ENCODE measurements at regions of chr1 and their contacts with region 1.

Region 1: GRCh38 chr1:207868774-207869721 is 41.9 kb downstream of the CD34 start:
- DNase-seq: peak; percentile 90
- ATAC-seq: peak; percentile 87
- H3K4me3 ChIP-seq: peak overlapping the region; percentile 86
- H3K27ac ChIP-seq: peak overlapping the region; percentile 96
- H3K4me1 ChIP-seq: peaks cover 70% of the 10 kb centered on the region
- H3K27me3 ChIP-seq: no peaks in the 10 kb centered on the region
- CTCF ChIP-seq: peak; percentile 73

Region 2: DNA sequence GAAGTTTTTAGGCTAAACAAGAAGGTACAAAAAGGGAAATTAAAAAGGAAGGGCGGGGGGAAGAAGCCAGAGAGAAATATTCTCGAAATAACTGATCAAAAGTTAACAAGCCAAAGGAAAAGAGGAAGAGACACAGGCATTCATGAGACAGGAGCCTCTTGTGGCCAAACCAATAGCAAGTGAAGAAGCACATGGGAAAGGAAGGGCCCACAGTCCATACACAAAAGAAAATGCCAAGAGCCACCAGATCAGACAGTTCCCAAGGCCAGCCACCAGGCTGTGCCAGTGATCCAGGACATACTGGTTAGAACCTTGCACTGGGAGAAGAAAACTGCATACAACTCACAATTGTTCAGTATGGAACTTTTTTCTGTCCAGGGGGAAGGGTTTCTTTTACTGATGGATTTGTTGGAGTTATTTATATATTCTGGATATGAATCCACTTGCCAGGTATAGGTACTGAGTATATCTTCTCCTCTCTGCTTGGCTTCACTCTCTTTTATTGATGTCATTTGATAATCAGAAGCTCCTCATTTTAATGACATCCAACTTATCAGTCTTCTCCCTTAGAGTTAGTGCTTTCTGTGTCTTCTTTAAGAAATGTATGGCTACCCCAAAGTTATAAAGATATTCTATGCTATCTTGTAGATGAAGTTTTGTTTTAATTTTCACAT is 40.4 kb before region 1 on chr1:
- intact Hi-C with region 1: loop called (anchors 5 kb)
- DNase-seq: peak; percentile 85
- ATAC-seq: peak; percentile 73
- H3K4me3 ChIP-seq: no peak overlapping the region
- H3K27ac ChIP-seq: peak overlapping the region; percentile 98
- H3K4me1 ChIP-seq: peaks cover 84% of the 10 kb centered on the region
- H3K27me3 ChIP-seq: no peaks in the 10 kb centered on the region
- CTCF ChIP-seq: peak; percentile 91